Activated CD4-positive, alpha-beta T cell treated with anti-CD3 and anti-CD28 coated beads, Interleukin-2, amount 10 ng/mL, durations not matched to agents 24 days and 14 days (primary cell): ENCODE measurements at regions of chr11 and their contacts with region 1.

Region 1: DNA sequence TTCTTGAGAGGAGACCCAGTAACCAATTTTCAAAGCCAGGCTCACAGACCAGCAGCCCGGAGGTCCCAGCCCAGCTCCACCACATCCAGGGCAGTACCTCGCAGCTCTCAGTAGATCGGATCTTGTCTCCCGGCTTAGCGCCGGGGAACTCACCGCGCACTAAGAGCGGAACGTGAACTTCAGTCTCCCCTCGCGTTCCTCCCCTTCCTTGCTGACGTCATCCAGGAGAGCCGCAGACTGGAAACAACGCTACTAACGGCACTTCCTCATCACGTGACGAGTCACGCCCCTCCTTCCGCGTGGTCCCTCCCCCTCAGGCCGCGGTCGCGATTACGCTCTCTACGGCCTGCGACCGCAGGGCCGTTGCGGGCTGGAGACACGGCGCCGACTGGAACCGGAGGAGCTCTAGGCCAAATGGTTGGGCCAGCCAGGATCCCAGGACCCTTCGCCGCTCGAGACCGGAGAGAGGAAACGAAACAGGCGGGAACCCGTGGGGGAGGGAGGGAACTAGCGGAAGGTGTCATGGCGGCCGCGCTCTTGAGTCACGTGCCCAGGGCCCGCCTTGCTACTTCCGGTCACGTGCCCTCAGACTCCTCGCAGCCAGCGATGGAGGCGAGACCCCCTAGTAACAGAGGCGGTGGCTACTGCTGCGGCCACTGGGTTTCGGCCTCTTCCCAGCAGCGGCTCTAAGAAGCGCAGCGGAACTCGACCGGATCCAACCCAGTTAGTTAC is at the starts of genes GTF2H1 and HPS5:
- DNase-seq: peak; percentile 99
- H3K4me3 Mint-ChIP-seq: peak within 1 kb of the TSS; percentile 94
- H3K27ac Mint-ChIP-seq: peak within 1 kb of the TSS; percentile 99
- H3K4me1 Mint-ChIP-seq: peaks cover 55% of the 10 kb centered on the region
- H3K27me3 Mint-ChIP-seq: no peaks in the 10 kb centered on the region
- total RNA-seq, gene GTF2H1: 54.6 and 55.7 TPM in 2 replicates
- total RNA-seq, gene HPS5: 20.5 and 24.5 TPM in 2 replicates

Region 2: DNA sequence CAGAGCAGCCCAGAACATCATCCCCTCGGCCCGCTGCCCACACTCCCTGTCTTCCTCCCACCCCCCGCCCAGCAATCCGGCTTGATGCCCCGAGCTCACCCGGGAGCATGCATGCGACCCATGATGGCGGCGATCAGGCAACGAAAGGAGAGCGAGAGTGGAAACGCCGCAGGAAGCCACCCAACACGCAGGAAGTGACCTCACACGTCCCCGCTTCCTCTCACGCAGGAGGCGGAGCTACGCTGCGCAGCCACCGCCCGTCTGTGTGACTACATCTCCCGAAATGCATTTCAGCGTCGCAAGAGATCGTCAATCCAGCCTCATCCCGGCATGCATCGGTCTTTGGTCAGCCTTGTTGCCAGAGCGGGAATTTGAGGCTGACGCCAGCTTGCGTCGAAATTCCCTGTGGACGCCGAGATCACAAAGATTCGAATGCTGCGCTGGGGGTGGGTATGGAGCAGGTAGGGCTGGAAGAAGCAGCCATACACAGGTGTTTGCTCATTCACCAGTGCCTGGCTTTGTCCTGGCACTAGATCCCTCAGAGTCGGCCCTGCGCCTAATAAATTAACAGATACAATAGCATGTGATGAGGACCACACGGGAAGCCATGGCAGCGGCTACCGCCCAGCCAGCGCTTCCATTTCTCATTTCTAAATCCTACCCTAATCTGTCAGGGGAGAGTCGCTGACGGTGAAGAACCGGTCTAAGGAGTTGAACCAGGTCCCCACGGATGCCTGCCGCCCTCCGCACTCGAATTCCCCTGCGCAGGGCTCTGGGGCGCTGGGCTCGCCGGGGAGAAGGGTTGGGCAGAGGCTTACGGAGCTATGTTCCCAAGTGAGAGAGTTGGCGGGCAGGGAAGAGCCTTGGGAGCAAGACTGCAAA is 1244.4 kb before region 1 on chr11 and contains the start of gene RPS13:
- intact Hi-C with region 1: loop called (anchors 5 kb)
- DNase-seq: peak; percentile 98
- H3K4me3 Mint-ChIP-seq: peak within 1 kb of the TSS; percentile 92
- H3K27ac Mint-ChIP-seq: peak within 1 kb of the TSS; percentile 98
- H3K4me1 Mint-ChIP-seq: peaks cover 24% of the 10 kb centered on the region
- H3K27me3 Mint-ChIP-seq: no peaks in the 10 kb centered on the region
- total RNA-seq, gene RPS13: 1,328 and 1,337 TPM in 2 replicates

Region 3: GRCh38 chr11:18243783-18244362 is 78.3 kb before region 1 on chr11:
- intact Hi-C with region 1: loop called (anchors 2 kb)
- DNase-seq: peak; percentile 93
- H3K4me3 Mint-ChIP-seq: no peak overlapping the region
- H3K27ac Mint-ChIP-seq: no peak overlapping the region
- H3K4me1 Mint-ChIP-seq: peaks cover 26% of the 10 kb centered on the region
- H3K27me3 Mint-ChIP-seq: peaks cover 27% of the 10 kb centered on the region

Region 4: GRCh38 chr11:18395735-18396504 is 73.8 kb after region 1 on chr11:
- intact Hi-C with region 1: loop called (anchors 1 kb)
- DNase-seq: peak; percentile 99
- H3K4me3 Mint-ChIP-seq: peak overlapping the region; percentile 97
- H3K27ac Mint-ChIP-seq: peak overlapping the region; percentile 98
- H3K4me1 Mint-ChIP-seq: peaks cover 54% of the 10 kb centered on the region
- H3K27me3 Mint-ChIP-seq: no peaks in the 10 kb centered on the region

Region 5: GRCh38 chr11:18588297-18589252 is 266.4 kb after region 1 on chr11 and contains the start of gene UEVLD:
- intact Hi-C with region 1: loop called (anchors 2 kb)
- DNase-seq: peak; percentile 91
- H3K4me3 Mint-ChIP-seq: no peak within 1 kb of the TSS
- H3K27ac Mint-ChIP-seq: no peak within 1 kb of the TSS
- H3K4me1 Mint-ChIP-seq: peaks cover 12% of the 10 kb centered on the region
- H3K27me3 Mint-ChIP-seq: no peaks in the 10 kb centered on the region
- total RNA-seq, gene UEVLD: 19.2 and 20.7 TPM in 2 replicates